ENCODE measurements at regions of chr9 and their contacts with region 1.

Region 1: GRCh38 chr9:127980706-127981558 is at the start of gene EEIG1:
- DNase-seq: peak; percentile 98
- H3K4me3 ChIP-seq: peak within 1 kb of the TSS; percentile 74 to 91 (median 90)
- H3K27ac ChIP-seq: peak within 1 kb of the TSS; percentile 94 to 98 (median 98)
- H3K4me1 ChIP-seq: peaks cover 20 to 41% (median 38%) of the 10 kb centered on the region in 4 donors
- H3K27me3 ChIP-seq: no peaks in the 10 kb centered on the region
- CTCF ChIP-seq: no peak
- EP300 ChIP-seq: no peak
- POLR2A ChIP-seq: peak; percentile 87
- total RNA-seq, gene EEIG1: 77.0 to 230 (median 96.7) TPM

Region 2: DNA sequence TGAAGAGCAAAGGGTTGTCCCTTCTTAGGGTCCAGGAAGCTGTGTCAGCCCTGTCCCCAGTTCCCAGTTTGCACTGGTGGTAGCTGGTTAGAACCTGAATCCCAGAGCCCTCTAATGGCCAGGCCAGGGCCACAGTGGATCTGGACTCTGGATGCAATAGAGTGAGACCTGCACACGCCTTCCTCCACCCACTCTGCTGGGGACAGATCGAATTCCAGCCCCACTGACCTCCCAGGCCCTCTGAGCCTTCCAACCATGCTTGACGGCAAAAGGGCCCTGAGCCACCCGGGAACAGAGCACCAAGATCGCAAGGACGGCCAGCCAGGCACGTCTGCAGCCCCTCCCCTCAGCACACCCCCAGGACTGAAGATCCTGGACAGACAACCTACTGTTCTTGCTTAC is 62.5 kb after region 1 on chr9:
- in situ Hi-C with region 1: no loop called
- intact Hi-C with region 1: loop called (anchors 10 kb)
- DNase-seq: no peak
- H3K4me3 ChIP-seq: no peak overlapping the region
- H3K27ac ChIP-seq: no peak overlapping the region
- H3K4me1 ChIP-seq: no peaks in the 10 kb centered on the region
- H3K27me3 ChIP-seq: no peaks in the 10 kb centered on the region
- CTCF ChIP-seq: no peak
- EP300 ChIP-seq: no peak
- POLR2A ChIP-seq: no peak

Region 3: GRCh38 chr9:128494108-128494745 is 513.3 kb after region 1 on chr9:
- in situ Hi-C with region 1: no loop called
- intact Hi-C with region 1: no loop called
- DNase-seq: peak; percentile 58
- H3K4me3 ChIP-seq: no peak overlapping the region
- H3K27ac ChIP-seq: peak overlapping the region in 2 of 4 donors; percentile 6 to 50
- H3K4me1 ChIP-seq: peaks cover 0 to 7% (median 2%) of the 10 kb centered on the region in 4 donors
- H3K27me3 ChIP-seq: no peaks in the 10 kb centered on the region
- CTCF ChIP-seq: no peak
- EP300 ChIP-seq: no peak
- POLR2A ChIP-seq: no peak